ENCODE measurements at regions of chr2 and their contacts with region 1.

Region 1: GRCh38 chr2:127355386-127356008 is 32.3 kb downstream of the MAP3K2 start:
- DNase-seq: peak in 1 of 2 donors; percentile 74
- ATAC-seq: peak; percentile 65 to 72 (median 68)
- H3K4me3 ChIP-seq: no peak overlapping the region
- H3K4me3 Mint-ChIP-seq: no peak overlapping the region
- H3K27ac ChIP-seq: no peak overlapping the region
- H3K27ac Mint-ChIP-seq: peak overlapping the region; percentile 10 to 67
- H3K4me1 ChIP-seq: peaks cover 4% of the 10 kb centered on the region
- H3K4me1 Mint-ChIP-seq: peaks cover 63 to 71% of the 10 kb centered on the region in 2 donors
- H3K27me3 ChIP-seq: no peaks in the 10 kb centered on the region
- H3K27me3 Mint-ChIP-seq: no peaks in the 10 kb centered on the region
- CTCF ChIP-seq: peak; percentile 62

Region 2: DNA sequence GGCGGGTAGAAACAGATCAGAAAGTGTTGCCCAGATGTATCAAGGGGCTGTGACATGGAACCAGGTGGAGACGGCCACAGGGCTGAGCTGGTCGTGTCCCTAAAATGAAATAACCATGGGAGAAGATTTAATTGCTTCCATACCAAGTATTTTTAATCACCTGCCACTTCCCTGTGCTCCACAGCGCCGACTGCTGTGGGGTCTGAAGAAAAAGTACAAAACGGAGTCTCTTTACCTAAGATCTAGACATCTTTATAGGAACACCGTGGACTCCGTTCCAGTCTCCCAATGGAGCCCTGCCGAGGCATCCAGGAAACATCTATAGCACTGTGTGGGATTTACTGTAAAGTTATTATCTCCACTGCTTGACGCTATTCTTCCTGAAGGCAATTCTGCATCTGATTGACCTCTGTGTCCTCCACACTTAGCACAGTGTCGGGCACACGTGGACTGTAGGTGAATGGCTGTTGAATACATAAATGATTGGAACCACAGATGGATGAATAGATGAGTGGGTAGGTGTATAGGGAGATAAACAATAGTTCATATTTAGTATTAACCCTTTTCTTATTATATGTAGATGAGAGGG is 721.1 kb before region 1 on chr2:
- intact Hi-C with region 1: no loop called
- DNase-seq: peak in 1 of 2 donors; percentile 58
- ATAC-seq: peak in 2 of 3 donors; percentile 46 to 62
- H3K4me3 ChIP-seq: no peak overlapping the region
- H3K4me3 Mint-ChIP-seq: no peak overlapping the region
- H3K27ac ChIP-seq: no peak overlapping the region
- H3K27ac Mint-ChIP-seq: no peak overlapping the region
- H3K4me1 ChIP-seq: no peaks in the 10 kb centered on the region
- H3K4me1 Mint-ChIP-seq: peaks cover 0 to 5% of the 10 kb centered on the region in 2 donors
- H3K27me3 ChIP-seq: peaks cover 2% of the 10 kb centered on the region
- H3K27me3 Mint-ChIP-seq: peaks cover 14 to 15% of the 10 kb centered on the region in 2 donors
- CTCF ChIP-seq: peak; percentile 62

Region 3: GRCh38 chr2:127415593-127416505 is 60.4 kb after region 1 on chr2:
- intact Hi-C with region 1: loop called (anchors 1 kb)
- DNase-seq: peak; percentile 69 to 91
- ATAC-seq: peak; percentile 90 to 92 (median 91)
- H3K4me3 ChIP-seq: peak overlapping the region; percentile 55
- H3K4me3 Mint-ChIP-seq: peak overlapping the region; percentile 79
- H3K27ac ChIP-seq: no peak overlapping the region
- H3K27ac Mint-ChIP-seq: peak overlapping the region in 1 of 2 donors; percentile 82
- H3K4me1 ChIP-seq: peaks cover 19% of the 10 kb centered on the region
- H3K4me1 Mint-ChIP-seq: peaks cover 14 to 18% of the 10 kb centered on the region in 2 donors
- H3K27me3 ChIP-seq: no peaks in the 10 kb centered on the region
- H3K27me3 Mint-ChIP-seq: peaks cover 32 to 38% of the 10 kb centered on the region in 2 donors
- CTCF ChIP-seq: peak; percentile 63

Region 4: GRCh38 chr2:127479219-127479825 is 123.8 kb after region 1 on chr2:
- intact Hi-C with region 1: loop called (anchors 2 kb)
- DNase-seq: peak in 1 of 2 donors; percentile 69
- ATAC-seq: peak in 2 of 3 donors; percentile 57 to 64
- H3K4me3 ChIP-seq: no peak overlapping the region
- H3K4me3 Mint-ChIP-seq: no peak overlapping the region
- H3K27ac ChIP-seq: no peak overlapping the region
- H3K27ac Mint-ChIP-seq: peak overlapping the region in 1 of 2 donors; percentile 48
- H3K4me1 ChIP-seq: no peaks in the 10 kb centered on the region
- H3K4me1 Mint-ChIP-seq: peaks cover under 1 to 5% of the 10 kb centered on the region in 2 donors
- H3K27me3 ChIP-seq: no peaks in the 10 kb centered on the region
- H3K27me3 Mint-ChIP-seq: no peaks in the 10 kb centered on the region
- CTCF ChIP-seq: peak; percentile 73